ENCODE measurements at regions of chr5 and their contacts with region 1.

Region 1: GRCh38 chr5:126852091-126852571 is 75.2 kb downstream of the LMNB1 start:
- DNase-seq: peak; percentile 80
- H3K4me3 Mint-ChIP-seq: peak overlapping the region; percentile 76
- H3K27ac Mint-ChIP-seq: peak overlapping the region; percentile 86
- H3K4me1 Mint-ChIP-seq: peaks cover 45% of the 10 kb centered on the region
- H3K27me3 Mint-ChIP-seq: no peaks in the 10 kb centered on the region

Region 2: DNA sequence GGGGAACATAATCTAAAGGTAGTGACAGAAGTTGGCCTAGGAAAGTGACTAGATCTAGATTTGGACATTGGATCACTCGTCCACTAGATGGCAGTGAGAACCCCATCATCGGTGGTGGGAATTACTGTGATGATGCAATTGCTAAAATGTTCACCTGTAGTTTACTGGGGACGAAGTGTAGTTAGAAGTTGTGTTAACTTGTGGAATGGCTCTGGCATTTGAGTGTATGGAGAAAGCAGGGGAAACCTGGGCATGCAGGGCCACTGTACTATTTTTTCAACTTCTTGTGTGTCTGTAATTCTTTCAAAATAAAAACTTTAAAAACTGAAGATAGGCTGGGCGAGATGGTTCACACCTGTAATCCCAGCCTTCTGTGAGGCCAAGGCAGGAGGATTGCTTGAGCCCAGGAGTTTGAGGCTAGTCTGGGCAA is 175.9 kb before region 1 on chr5:
- intact Hi-C with region 1: loop called (anchors 5 kb)
- DNase-seq: peak; percentile 91
- H3K4me3 Mint-ChIP-seq: no peak overlapping the region
- H3K27ac Mint-ChIP-seq: no peak overlapping the region
- H3K4me1 Mint-ChIP-seq: peaks cover 22% of the 10 kb centered on the region
- H3K27me3 Mint-ChIP-seq: no peaks in the 10 kb centered on the region

Region 3: DNA sequence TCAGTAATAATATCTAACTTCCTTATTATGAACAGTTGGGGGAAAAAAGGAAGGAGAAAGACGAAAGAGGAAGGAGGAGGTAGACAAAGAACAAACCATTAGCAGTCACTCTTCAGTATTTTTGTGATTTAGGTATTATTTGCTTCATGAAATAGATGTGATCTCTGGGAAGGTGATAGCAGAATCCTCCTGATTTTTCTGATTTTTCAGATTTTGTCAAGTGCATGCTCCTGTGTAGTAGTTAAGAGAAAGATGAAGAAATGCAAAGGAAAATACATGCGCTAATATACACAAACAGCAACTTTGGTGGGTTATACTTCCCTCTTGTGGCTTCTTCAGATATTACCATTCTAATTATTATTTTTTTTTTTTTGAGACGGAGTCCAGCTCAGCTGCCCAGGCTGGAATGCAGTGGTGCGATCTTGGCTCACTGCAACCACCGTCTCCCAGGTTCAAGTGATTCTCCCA is 43.6 kb before region 1 on chr5:
- intact Hi-C with region 1: loop called (anchors 5 kb)
- DNase-seq: no peak
- H3K4me3 Mint-ChIP-seq: no peak overlapping the region
- H3K27ac Mint-ChIP-seq: peak overlapping the region; percentile 82
- H3K4me1 Mint-ChIP-seq: peaks cover 47% of the 10 kb centered on the region
- H3K27me3 Mint-ChIP-seq: no peaks in the 10 kb centered on the region

Region 4: GRCh38 chr5:127072861-127073846 is 221.0 kb after region 1 on chr5 and contains the start of gene C5orf63:
- intact Hi-C with region 1: loop called (anchors 10 kb)
- DNase-seq: peak; percentile 91
- H3K4me3 Mint-ChIP-seq: peak within 1 kb of the TSS; percentile 91
- H3K27ac Mint-ChIP-seq: peak within 1 kb of the TSS; percentile 90
- H3K4me1 Mint-ChIP-seq: peaks cover 18% of the 10 kb centered on the region
- H3K27me3 Mint-ChIP-seq: no peaks in the 10 kb centered on the region
- total RNA-seq, gene C5orf63: 5.6 and 5.7 TPM in 2 replicates

Region 5: DNA sequence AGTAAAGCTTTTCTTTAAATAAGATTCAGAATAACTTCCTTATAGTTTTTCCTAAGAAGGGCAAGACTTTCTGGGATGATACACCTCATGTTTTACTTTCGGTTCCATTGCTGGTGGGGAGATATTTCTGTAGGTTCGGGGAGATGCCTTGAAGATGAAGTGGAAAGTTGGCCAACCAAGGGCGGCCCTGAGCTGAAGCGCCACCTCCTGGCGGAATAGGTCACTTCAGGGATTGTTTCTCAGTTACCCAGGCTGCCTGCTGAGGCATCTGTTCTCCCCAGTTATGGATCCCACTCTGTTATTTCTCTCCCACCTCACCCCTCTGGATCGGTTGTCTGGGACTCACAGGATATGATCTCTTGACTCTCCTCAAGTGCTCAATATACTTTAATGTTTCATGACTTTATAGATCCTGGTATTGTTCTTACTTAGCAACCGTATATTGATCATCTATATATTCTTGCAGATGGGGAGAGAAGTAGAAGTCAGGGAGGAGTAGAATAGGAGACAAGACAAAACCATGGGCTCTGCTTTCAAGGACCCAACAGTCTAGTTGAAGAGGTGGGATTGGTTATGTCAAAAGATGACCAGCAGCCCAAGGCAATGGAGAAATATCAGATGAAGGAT is 461.8 kb after region 1 on chr5:
- intact Hi-C with region 1: loop called (anchors 10 kb)
- DNase-seq: peak; percentile 90
- H3K4me3 Mint-ChIP-seq: no peak overlapping the region
- H3K27ac Mint-ChIP-seq: no peak overlapping the region
- H3K4me1 Mint-ChIP-seq: no peaks in the 10 kb centered on the region
- H3K27me3 Mint-ChIP-seq: peaks cover 22% of the 10 kb centered on the region